Activated B cell treated with CpG ODN at 0.5 μM for 24 hours (primary cell): ENCODE measurements at regions of chr21 and their contacts with region 1.

Region 1: GRCh38 chr21:29318354-29318753 is 19.6 kb downstream of the BACH1 start:
- DNase-seq: no peak
- ATAC-seq: no peak
- H3K4me3 Mint-ChIP-seq: no peak overlapping the region
- H3K27ac Mint-ChIP-seq: peak overlapping the region; percentile 13
- H3K4me1 Mint-ChIP-seq: peaks cover 69% of the 10 kb centered on the region
- H3K27me3 Mint-ChIP-seq: no peaks in the 10 kb centered on the region
- CTCF ChIP-seq: no peak

Region 2: GRCh38 chr21:28725396-28725795 is 593.0 kb before region 1 on chr21:
- CTCF ChIA-PET with region 1: no interaction called
- POLR2A ChIA-PET with region 1: no interaction called
- intact Hi-C with region 1: no loop called
- DNase-seq: no peak
- ATAC-seq: no peak
- H3K4me3 Mint-ChIP-seq: no peak overlapping the region
- H3K27ac Mint-ChIP-seq: no peak overlapping the region
- H3K4me1 Mint-ChIP-seq: no peaks in the 10 kb centered on the region
- H3K27me3 Mint-ChIP-seq: no peaks in the 10 kb centered on the region
- CTCF ChIP-seq: no peak

Region 3: GRCh38 chr21:29306920-29307319 is 11.4 kb before region 1 on chr21:
- CTCF ChIA-PET with region 1: no interaction called
- POLR2A ChIA-PET with region 1: interaction called, 64 read pairs
- intact Hi-C with region 1: loop called (anchors 1 kb)
- DNase-seq: no peak
- ATAC-seq: no peak
- H3K4me3 Mint-ChIP-seq: peak overlapping the region; percentile 24
- H3K27ac Mint-ChIP-seq: peak overlapping the region; percentile 30
- H3K4me1 Mint-ChIP-seq: peaks cover 86% of the 10 kb centered on the region
- H3K27me3 Mint-ChIP-seq: no peaks in the 10 kb centered on the region
- CTCF ChIP-seq: no peak

Region 4: DNA sequence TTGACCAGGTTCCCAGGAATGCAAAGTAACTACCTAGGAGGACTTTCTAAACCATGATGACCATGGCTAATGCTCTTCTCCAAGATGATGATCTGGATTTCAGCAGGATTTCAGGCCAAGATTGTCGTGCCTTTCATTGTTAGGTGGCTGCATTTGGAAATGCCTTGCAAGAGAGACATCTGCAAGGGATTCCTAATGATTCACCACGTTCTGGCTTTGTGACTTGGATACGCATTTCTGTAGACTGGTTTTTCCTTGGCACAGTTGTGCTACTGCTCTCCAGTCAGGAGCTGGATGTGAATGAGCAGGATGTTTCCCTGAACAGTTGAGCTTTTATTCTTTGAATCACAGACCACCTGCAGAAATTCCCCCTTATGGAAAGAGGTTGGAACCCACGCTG is 192.7 kb after region 1 on chr21:
- CTCF ChIA-PET with region 1: no interaction called
- POLR2A ChIA-PET with region 1: no interaction called
- intact Hi-C with region 1: no loop called
- DNase-seq: no peak
- ATAC-seq: no peak
- H3K4me3 Mint-ChIP-seq: no peak overlapping the region
- H3K27ac Mint-ChIP-seq: no peak overlapping the region
- H3K4me1 Mint-ChIP-seq: peaks cover 5% of the 10 kb centered on the region
- H3K27me3 Mint-ChIP-seq: no peaks in the 10 kb centered on the region
- CTCF ChIP-seq: no peak